Adrenal gland (tissue), 19 donors: ENCODE measurements at regions of chr3 and their contacts with region 1.

Region 1: GRCh38 chr3:46705022-46705530 is 3.9 kb downstream of the TMIE start:
- DNase-seq: peak; percentile 70 to 94 (median 83)
- H3K4me3 ChIP-seq: no peak overlapping the region
- H3K27ac ChIP-seq: no peak overlapping the region
- H3K4me1 ChIP-seq: peaks cover 3 to 15% of the 10 kb centered on the region in 2 donors
- H3K27me3 ChIP-seq: no peaks in the 10 kb centered on the region
- CTCF ChIP-seq: peak; percentile 85 to 98 (median 95)
- POLR2A ChIP-seq: no peak

Region 2: GRCh38 chr3:46660543-46661523 is 44.2 kb before region 1 on chr3:
- intact Hi-C with region 1: no loop called
- DNase-seq: peak in 2 of 7 donors; percentile 32 to 51
- H3K4me3 ChIP-seq: no peak overlapping the region
- H3K27ac ChIP-seq: no peak overlapping the region
- H3K4me1 ChIP-seq: peaks cover 0 to 4% of the 10 kb centered on the region in 2 donors
- H3K27me3 ChIP-seq: no peaks in the 10 kb centered on the region
- CTCF ChIP-seq: no peak
- POLR2A ChIP-seq: no peak

Region 3: GRCh38 chr3:46866720-46867549 is 161.9 kb after region 1 on chr3:
- intact Hi-C with region 1: loop called (anchors 10 kb)
- DNase-seq: peak; percentile 70 to 91 (median 87)
- H3K4me3 ChIP-seq: no peak overlapping the region
- H3K27ac ChIP-seq: peak overlapping the region in 4 of 5 donors; percentile 5 to 82 (median 50)
- H3K4me1 ChIP-seq: peaks cover 14% of the 10 kb centered on the region in 2 donors
- H3K27me3 ChIP-seq: no peaks in the 10 kb centered on the region
- CTCF ChIP-seq: peak; percentile 74 to 91 (median 85)
- POLR2A ChIP-seq: no peak

Region 4: DNA sequence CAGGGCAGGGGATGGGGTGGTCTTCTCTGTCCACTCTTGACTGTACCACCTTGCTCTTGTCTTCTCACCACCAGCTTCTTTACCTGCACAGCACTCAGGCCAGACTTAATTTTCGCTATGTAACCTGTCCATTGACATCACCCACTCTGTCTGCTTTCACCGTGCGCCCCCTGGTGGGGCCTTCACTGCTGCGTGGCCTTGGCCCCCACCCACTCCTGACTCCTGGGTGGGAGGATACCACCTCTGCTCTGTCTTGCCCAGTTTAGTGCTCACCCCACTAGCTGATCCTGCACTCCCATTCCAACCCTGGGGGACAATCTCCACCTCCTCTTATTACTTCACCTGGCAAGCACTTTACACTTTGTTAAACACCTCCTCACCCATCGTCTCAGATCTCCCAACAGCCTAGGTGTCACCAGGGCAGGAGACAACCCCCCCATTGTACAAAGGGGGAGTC is 190.2 kb after region 1 on chr3:
- intact Hi-C with region 1: loop called (anchors 2 to 5 kb)
- DNase-seq: peak; percentile 60 to 87 (median 77)
- H3K4me3 ChIP-seq: no peak overlapping the region
- H3K27ac ChIP-seq: no peak overlapping the region
- H3K4me1 ChIP-seq: peaks cover 9 to 24% of the 10 kb centered on the region in 2 donors
- H3K27me3 ChIP-seq: peaks cover 11% of the 10 kb centered on the region
- CTCF ChIP-seq: peak; percentile 81 to 94 (median 86)
- POLR2A ChIP-seq: no peak

Region 5: GRCh38 chr3:46909535-46910442 is 204.7 kb after region 1 on chr3:
- intact Hi-C with region 1: loop called in 1 of 2 experiments (anchors 5 kb)
- DNase-seq: peak; percentile 85 to 96 (median 89)
- H3K4me3 ChIP-seq: no peak overlapping the region
- H3K27ac ChIP-seq: peak overlapping the region in 1 of 5 donors; percentile 44
- H3K4me1 ChIP-seq: peaks cover 0 to 16% of the 10 kb centered on the region in 2 donors
- H3K27me3 ChIP-seq: no peaks in the 10 kb centered on the region
- CTCF ChIP-seq: peak; percentile 72 to 89 (median 86)
- POLR2A ChIP-seq: no peak

Region 6: GRCh38 chr3:46935168-46935858 is 230.2 kb after region 1 on chr3:
- intact Hi-C with region 1: no loop called
- DNase-seq: peak; percentile 92 to 99 (median 98)
- H3K4me3 ChIP-seq: no peak overlapping the region
- H3K27ac ChIP-seq: peak overlapping the region; percentile 70 to 96 (median 87)
- H3K4me1 ChIP-seq: peaks cover 56 to 81% of the 10 kb centered on the region in 2 donors
- H3K27me3 ChIP-seq: no peaks in the 10 kb centered on the region
- CTCF ChIP-seq: peak in 5 of 6 experiments; percentile 20 to 84 (median 64)
- POLR2A ChIP-seq: peak in 1 of 2 donors; percentile 93

Region 7: GRCh38 chr3:46998121-46998851 is 293.2 kb after region 1 on chr3:
- intact Hi-C with region 1: loop called (anchors 10 kb)
- DNase-seq: peak; percentile 84 to 93 (median 89)
- H3K4me3 ChIP-seq: no peak overlapping the region
- H3K27ac ChIP-seq: no peak overlapping the region
- H3K4me1 ChIP-seq: peaks cover 0 to 8% of the 10 kb centered on the region in 2 donors
- H3K27me3 ChIP-seq: no peaks in the 10 kb centered on the region
- CTCF ChIP-seq: peak; percentile 83 to 93 (median 90)
- POLR2A ChIP-seq: no peak

Region 8: DNA sequence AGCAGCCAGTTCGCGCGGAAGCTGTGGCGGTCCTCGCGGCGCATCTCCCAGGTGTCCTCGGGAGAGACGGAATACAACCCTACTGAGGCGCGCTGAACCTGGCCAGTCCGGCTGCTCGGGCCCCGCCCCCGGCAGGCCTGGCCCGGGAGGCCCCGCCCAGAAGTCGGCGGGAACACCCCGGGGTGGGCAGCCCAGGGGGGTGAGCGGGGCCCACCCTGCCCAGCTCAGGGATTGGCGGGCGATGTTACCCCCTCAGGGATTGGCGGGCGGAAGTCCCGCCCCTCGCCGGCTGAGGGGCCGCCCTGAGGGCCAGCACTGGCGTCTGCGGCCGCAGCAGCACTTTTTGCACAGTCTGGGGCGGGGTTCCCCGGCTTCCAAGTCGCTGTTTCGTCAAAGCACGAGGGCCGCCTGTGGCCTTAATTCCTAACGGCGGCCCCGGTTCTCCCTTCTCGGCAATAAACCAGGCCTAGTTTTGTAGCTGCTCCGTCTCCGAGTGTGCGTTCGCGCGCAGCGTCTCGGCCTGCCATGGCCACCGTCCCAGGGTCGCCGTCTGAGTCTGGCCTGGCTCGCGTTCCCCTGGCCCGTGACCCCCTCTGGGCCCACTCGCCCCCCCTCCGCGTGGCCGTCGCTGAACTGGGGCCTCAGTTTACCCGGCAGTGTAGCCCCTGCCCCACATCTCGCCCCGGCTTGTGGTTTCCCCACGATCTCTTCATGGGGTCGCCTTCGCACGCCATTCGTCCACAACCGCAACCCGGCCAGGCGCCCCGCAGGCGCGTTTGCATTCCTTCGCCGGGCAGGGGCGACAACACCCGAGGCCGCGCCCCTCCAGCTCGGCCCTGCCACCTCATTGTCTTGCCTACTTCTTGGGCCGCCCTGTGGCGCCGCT is 304.4 kb after region 1 on chr3:
- intact Hi-C with region 1: loop called in 1 of 2 experiments (anchors 10 kb)
- DNase-seq: peak; percentile 90 to 95 (median 93)
- H3K4me3 ChIP-seq: peak overlapping the region in 2 of 4 donors; percentile 30 to 54
- H3K27ac ChIP-seq: peak overlapping the region; percentile 40 to 86 (median 79)
- H3K4me1 ChIP-seq: peaks cover 9 to 12% of the 10 kb centered on the region in 2 donors
- H3K27me3 ChIP-seq: no peaks in the 10 kb centered on the region
- CTCF ChIP-seq: no peak
- POLR2A ChIP-seq: peak; percentile 57 to 89